ENCODE measurements at regions of chr17 and their contacts with region 1.

Region 1: DNA sequence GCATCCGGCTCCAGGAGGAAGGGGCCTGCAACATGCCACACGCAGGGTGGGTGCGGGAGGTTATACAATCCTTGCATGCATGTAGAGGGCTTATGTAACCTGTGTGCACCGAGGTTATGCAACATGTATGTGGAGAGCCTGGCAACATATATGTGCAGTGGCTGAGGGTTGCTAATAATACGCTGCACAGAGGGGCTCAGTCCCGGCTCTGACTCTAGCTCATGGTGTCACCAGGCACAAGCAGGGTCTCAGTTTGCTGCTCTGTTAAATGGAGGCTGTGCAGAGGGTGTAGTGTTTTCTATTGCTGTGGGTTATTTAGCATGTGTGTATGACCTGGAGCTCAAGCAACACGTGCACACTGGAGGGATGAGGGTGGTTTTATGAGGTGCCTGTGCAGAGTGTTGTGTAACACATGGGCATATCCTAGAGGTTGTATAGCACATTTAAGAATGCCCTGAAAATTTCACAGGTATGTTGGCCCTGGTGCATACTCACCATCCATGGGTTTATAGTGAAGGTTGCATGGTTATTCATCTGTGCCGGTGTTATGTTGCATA is 13.3 kb downstream of the THRA start:
- DNase-seq: no peak
- ATAC-seq: no peak
- H3K4me3 ChIP-seq: peak overlapping the region; percentile 51
- H3K27ac ChIP-seq: peak overlapping the region; percentile 94
- H3K4me1 ChIP-seq: peaks cover 62% of the 10 kb centered on the region
- H3K27me3 ChIP-seq: no peaks in the 10 kb centered on the region
- CTCF ChIP-seq: no peak

Region 2: DNA sequence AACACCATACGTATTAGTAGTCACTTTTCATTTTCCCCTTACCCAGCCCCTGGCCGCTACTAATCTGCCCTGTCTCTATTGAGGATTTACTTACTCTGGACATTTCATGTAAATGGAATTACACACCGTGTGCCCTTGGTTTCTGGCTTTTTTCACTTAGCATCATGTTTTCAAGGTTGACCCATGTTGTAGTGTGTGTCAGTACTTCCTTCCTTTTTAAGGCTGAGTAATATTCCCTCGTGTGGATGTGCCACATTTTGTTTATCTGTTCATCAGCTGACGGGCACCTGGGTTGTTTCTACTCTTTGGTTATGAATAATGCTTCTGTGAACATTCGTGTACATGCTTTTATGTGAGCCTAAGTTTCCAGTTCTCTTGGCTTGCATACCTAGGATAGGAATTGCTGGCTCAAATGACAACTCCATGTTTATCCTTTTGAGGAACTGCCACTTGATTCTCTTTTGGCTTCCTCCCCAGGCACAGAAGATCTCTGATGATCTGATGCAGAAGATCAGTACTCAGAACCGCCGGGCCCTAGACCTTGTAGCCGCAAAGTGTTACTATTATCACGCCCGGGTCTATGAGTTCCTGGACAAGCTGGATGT is 87.7 kb before region 1 on chr17:
- intact Hi-C with region 1: no loop called
- DNase-seq: no peak
- ATAC-seq: peak in 2 of 4 donors; percentile 61 to 73
- H3K4me3 ChIP-seq: no peak overlapping the region
- H3K27ac ChIP-seq: peak overlapping the region; percentile 53
- H3K4me1 ChIP-seq: peaks cover 10% of the 10 kb centered on the region
- H3K27me3 ChIP-seq: no peaks in the 10 kb centered on the region
- CTCF ChIP-seq: no peak

Region 3: DNA sequence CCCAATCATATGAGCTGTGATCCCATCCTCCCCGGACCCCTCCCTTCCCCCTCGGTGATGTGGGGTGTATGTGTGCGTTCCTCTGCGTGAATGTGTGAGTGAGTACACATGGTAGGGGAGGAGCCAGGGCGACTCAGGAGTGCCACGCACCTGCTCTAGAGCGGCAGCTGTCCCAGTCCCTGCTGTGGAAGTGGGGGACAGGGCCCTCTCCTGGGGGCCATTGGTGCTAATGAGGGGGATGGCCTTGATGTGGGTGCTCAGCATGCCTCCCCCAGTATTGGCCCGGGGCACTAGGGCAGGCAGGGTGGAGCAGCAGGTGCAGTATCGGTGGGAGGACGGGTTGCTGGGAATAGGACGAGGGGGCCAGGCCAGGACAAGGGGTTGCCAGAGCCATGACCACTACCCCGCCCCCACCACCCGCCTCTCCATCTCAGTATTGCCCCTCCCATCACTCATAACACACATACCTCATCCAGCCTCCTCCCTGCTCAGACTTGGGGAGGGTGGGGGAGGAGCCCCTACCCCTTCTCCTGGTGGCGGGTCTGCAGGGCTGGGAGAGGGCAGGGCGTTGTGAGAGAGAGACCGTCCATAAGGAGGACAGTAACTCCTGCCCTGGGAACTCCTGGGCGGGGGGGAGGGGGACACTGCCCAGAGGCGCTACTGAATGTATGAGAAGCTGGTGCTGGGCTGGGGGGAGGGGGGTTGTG is 15.8 kb after region 1 on chr17:
- intact Hi-C with region 1: loop called in 1 of 2 experiments (anchors 2 kb)
- DNase-seq: peak; percentile 59 to 72
- ATAC-seq: peak; percentile 34 to 42 (median 38)
- H3K4me3 ChIP-seq: peak overlapping the region; percentile 47
- H3K27ac ChIP-seq: peak overlapping the region; percentile 99
- H3K4me1 ChIP-seq: peaks cover 60% of the 10 kb centered on the region
- H3K27me3 ChIP-seq: no peaks in the 10 kb centered on the region
- CTCF ChIP-seq: no peak

Region 4: DNA sequence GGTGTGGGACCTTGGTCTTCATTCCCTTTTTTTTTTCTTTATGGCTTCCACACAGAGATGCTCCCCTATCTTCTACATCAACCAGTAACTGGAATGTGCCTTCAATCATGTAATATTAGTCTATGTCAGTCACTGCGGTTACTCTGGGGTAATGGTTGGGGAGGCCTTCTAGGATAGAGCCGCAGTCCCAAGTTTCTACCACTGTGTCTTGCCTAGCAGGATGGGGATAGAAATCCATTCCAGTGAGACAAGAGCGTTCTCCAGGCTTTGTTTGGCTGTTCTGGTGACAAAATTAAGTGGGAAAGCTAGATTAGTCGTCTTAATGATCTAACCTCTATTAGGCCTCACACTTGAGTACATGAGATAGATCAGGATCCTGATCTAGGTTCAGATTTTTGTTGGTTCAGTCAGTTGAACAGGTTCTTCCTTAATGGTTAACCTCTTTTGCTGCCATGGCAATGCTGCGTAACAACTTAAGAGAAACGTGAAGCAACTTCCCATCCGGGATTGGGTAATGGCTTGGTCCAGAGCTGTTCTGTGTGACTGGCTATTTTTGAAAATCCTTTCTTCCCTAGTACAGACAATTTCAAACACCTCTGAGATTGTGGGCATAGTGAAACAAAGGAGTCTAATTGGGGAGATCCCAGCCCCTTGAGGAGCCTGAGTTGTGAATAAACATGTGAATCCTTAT is 54.5 kb after region 1 on chr17:
- intact Hi-C with region 1: no loop called
- DNase-seq: no peak
- ATAC-seq: peak in 2 of 4 donors; percentile 34 to 41
- H3K4me3 ChIP-seq: no peak overlapping the region
- H3K27ac ChIP-seq: no peak overlapping the region
- H3K4me1 ChIP-seq: peaks cover under 1% of the 10 kb centered on the region
- H3K27me3 ChIP-seq: no peaks in the 10 kb centered on the region
- CTCF ChIP-seq: no peak

Measured in psoas muscle (tissue), 8 donors.